Vagina (tissue), 2 donors: ENCODE measurements at regions of chr13 and their contacts with region 1.

Region 1: DNA sequence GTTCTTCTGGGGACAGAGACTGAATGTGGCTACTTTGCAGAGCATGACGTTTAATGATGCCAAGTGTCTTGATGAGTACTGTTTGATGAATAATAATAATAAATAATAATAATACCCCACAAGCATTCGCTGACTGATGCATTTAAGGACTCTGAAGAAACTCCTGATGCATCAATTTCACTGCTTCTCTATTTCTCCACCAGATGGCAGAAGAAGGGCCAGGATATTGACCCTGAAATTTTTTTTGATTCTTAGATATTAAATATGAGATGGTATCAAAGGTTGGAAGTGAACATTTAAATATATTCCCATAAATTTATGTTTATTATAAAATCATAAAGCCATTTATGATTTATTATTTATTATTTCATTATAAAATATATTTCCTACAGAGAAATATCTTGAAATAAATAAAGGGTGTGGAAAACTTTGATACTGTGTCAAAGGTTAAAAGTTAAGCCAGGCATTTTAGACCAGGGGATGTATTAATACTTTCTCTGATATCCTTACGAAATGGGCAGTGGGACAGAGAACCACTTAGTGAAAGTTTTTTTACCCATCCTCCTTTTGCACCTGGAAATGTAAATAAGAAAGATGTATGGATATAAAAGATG is 170.9 kb downstream of the LACC1 start:
- DNase-seq: no peak
- H3K4me3 ChIP-seq: no peak overlapping the region
- H3K27ac ChIP-seq: no peak overlapping the region
- H3K4me1 ChIP-seq: peaks cover 6% of the 10 kb centered on the region
- H3K27me3 ChIP-seq: no peaks in the 10 kb centered on the region
- CTCF ChIP-seq: peak; percentile 37 to 75 (median 41)
- POLR2A ChIP-seq: no peak

Region 2: GRCh38 chr13:43915451-43915850 is 135.1 kb before region 1 on chr13:
- intact Hi-C with region 1: loop called (anchors 10 kb)
- DNase-seq: no peak
- H3K4me3 ChIP-seq: no peak overlapping the region
- H3K27ac ChIP-seq: no peak overlapping the region
- H3K4me1 ChIP-seq: no peaks in the 10 kb centered on the region
- H3K27me3 ChIP-seq: no peaks in the 10 kb centered on the region
- CTCF ChIP-seq: no peak
- POLR2A ChIP-seq: no peak

Region 3: DNA sequence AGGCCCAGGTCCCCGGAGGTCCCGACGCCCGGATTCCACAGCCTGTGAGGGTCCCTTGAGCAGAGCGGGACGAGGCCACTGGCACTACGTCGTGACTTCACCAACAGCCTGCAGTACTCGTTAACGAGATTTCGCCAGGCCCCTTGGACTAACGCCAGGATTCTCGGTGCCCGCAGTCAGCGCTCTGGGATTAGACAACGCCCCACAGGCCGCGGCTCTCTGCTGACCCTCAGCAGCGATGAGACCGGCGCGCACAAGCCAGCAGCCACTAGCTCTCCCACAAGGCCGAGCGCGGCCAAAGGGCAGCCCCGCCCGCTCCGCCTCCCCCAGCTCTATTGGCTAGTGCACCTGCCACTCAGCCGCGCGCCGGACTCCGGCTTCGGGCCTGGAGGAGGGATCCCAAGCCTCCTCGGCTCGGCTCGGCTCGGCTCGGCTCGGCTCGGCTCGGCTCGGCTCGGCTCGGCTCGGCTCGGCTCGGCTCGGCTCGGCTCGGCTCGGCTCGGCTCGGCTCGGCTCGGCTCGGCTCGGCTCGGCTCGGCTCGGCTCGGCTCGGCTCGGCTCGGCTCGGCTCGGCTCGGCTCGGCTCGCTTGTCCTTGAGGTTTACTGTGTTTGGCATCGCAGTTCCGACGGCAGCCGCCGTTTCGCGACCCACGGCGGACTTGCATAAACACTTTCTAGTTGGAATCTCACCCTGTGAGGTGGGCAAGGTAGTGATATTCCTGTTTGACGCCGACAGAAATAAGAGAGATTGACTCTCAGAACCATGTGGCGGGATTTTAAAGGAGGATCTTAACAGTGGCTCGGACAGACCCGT is 91.4 kb after region 1 on chr13:
- intact Hi-C with region 1: loop called (anchors 10 kb)
- DNase-seq: peak; percentile 98
- H3K4me3 ChIP-seq: peak overlapping the region; percentile 40 to 61
- H3K27ac ChIP-seq: peak overlapping the region; percentile 83
- H3K4me1 ChIP-seq: peaks cover 5% of the 10 kb centered on the region
- H3K27me3 ChIP-seq: no peaks in the 10 kb centered on the region
- CTCF ChIP-seq: peak in 1 of 3 experiments; percentile 12
- POLR2A ChIP-seq: peak; percentile 8 to 96